Endothelial cell of umbilical vein (primary cell): ENCODE measurements at regions of chr6 and their contacts with region 1.

Region 1: DNA sequence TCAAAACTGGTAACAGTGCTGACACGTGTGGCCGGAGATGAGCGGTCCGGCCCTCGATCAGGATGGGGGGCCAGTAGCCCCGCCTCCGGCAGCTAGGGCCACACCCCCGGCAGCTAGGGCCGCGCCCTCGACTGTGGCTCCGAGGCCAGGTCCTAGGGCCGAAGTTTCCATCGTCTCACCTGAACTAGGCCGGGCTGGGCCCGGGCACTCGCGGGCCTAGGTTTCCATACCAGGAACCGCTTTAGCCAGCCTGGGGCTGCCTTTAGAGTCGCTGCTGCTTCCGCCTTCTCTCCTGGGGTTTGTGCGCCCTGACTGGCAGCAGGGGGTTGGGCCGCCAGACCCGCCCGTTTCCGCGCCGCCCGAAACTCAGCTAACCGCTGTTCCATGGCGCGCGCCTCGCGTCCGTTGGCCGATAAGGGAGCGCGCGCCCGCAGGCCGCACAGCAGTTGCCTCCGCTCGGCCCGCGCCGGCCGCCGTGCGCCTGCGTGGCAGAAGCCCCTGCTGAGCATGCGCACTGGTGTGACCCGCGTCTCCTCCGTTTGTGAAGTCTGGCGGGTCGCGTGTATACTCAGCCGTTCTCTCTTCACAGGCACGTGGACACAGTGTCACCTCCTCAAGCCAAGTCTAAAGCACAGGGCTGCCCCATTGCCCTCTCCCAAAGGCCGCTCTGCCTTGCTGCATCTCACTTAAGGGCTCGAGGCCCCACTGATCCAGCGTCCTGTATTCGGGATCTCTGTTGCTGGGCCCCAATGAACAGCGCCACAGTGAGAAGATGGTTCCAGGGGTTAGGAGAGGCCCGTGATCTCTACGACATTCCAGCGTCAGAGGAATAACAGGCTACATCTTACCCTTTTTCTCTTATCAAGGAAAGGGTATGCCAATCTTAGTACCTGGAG is at the start of gene SAYSD1:
- DNase-seq: peak; percentile 92
- H3K4me3 ChIP-seq: peak within 1 kb of the TSS; percentile 40 to 81 (median 63)
- H3K27ac ChIP-seq: peak within 1 kb of the TSS; percentile 41
- H3K4me1 ChIP-seq: peaks cover 13% of the 10 kb centered on the region
- H3K27me3 ChIP-seq: peaks cover 2 to 5% of the 10 kb centered on the region in 2 experiments
- CTCF ChIP-seq: no peak
- POLR2A ChIP-seq: peak; percentile 59
- total RNA-seq, gene SAYSD1: 7.1 and 9.0 TPM in 2 replicates

Region 2: DNA sequence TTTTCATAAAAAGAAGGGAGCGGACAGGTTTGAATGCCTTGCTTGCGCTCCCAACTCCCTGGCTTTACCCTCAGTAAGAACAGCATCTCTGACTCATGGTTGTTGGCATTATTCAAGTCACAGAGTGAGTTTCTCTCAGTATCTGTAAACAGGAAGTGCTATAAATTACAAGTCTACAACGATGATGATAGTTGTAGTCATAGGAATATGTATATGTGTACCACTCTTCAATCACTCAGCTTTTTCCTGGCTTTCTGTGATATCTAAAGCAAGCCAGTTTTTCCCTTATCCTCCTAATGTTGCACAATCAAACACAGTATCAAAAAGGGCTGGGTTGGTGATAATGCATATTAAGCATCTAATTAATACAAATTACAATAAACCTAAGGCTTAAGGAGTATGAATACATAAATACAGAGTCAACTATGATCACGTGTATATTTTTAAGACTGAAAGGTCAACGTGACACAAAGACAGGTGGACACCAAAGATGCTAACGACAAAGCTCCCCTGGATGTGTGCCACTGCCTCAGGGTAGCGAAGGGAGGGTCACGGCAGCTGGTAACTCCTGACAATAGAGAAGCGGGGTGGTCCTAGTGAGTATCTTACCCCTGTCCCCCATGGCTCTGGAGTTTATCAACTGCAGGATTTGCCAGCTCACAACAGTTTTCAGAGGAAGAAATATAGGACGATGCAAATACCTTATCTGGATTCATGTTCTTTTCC is 678.1 kb before region 1 on chr6:
- CTCF ChIA-PET with region 1: no interaction called
- POLR2A ChIA-PET with region 1: no interaction called
- dilution Hi-C with region 1: no loop called
- intact Hi-C with region 1: no loop called
- DNase-seq: peak; percentile 65
- H3K4me3 ChIP-seq: no peak overlapping the region
- H3K27ac ChIP-seq: peak overlapping the region; percentile 36
- H3K4me1 ChIP-seq: peaks cover 9% of the 10 kb centered on the region
- H3K27me3 ChIP-seq: no peaks in the 10 kb centered on the region
- CTCF ChIP-seq: no peak
- POLR2A ChIP-seq: no peak

Region 3: DNA sequence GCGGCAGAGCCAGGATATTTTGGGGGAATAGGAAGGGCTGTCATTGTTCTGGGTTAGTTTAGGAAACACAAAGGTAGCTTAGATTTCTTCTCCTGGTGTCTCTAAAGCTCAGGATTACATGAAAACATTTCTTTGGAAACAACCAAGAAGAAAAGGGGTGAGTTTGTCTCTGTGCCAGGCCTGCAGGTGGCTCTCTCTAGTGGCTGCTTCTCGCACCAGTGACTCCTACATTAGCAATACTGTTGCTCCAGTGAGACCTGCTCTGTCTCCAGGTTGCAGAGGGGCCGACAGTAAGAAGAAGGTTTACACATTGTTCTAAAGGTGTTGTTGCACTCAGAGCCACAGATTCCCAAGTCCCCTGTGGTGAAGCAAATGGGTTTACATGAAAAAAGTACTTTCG is 171.0 kb before region 1 on chr6:
- CTCF ChIA-PET with region 1: no interaction called
- POLR2A ChIA-PET with region 1: no interaction called
- dilution Hi-C with region 1: no loop called
- intact Hi-C with region 1: no loop called
- DNase-seq: no peak
- H3K4me3 ChIP-seq: no peak overlapping the region
- H3K27ac ChIP-seq: no peak overlapping the region
- H3K4me1 ChIP-seq: no peaks in the 10 kb centered on the region
- H3K27me3 ChIP-seq: peaks cover 3 to 5% of the 10 kb centered on the region in 2 experiments
- CTCF ChIP-seq: no peak
- POLR2A ChIP-seq: no peak

Region 4: DNA sequence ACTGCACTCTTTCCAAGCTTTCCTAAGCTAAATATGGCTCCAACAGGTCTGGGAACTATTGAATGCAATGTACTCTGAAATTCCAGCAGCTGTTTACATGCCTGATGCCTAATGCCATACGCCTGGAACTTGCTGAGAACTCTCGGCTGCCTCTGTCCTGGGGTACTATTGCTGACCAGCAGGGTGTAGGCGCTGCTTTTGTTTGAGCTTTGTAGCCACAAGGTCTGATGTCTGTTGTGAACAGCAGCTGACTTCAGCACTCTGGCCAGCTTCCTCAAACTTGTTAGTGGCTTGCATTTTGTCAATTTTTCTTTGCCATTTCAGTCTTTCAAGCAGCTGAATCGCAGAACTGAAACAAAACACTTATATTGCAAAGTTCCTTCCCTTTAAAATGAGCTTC is 26.6 kb before region 1 on chr6:
- CTCF ChIA-PET with region 1: interaction called, 3 read pairs
- POLR2A ChIA-PET with region 1: no interaction called
- dilution Hi-C with region 1: no loop called
- intact Hi-C with region 1: loop called (anchors 2 kb)
- DNase-seq: peak; percentile 37
- H3K4me3 ChIP-seq: no peak overlapping the region
- H3K27ac ChIP-seq: no peak overlapping the region
- H3K4me1 ChIP-seq: peaks cover 6% of the 10 kb centered on the region
- H3K27me3 ChIP-seq: peaks cover 17 to 29% of the 10 kb centered on the region in 2 experiments
- CTCF ChIP-seq: peak in 1 of 2 donors; percentile 31
- POLR2A ChIP-seq: no peak

Region 5: GRCh38 chr6:39102071-39102820 is 12.7 kb before region 1 on chr6:
- CTCF ChIA-PET with region 1: interaction called, 16 read pairs
- POLR2A ChIA-PET with region 1: no interaction called
- dilution Hi-C with region 1: no loop called
- intact Hi-C with region 1: no loop called
- DNase-seq: peak; percentile 9
- H3K4me3 ChIP-seq: no peak overlapping the region
- H3K27ac ChIP-seq: no peak overlapping the region
- H3K4me1 ChIP-seq: no peaks in the 10 kb centered on the region
- H3K27me3 ChIP-seq: peaks cover 0 to 5% of the 10 kb centered on the region in 2 experiments
- CTCF ChIP-seq: peak; percentile 7 to 18
- POLR2A ChIP-seq: no peak